H1 (cell line): ENCODE measurements at regions of chr16 and their contacts with region 1.

Region 1: GRCh38 chr16:117379-118365 is 20.8 kb downstream of the NPRL3 start:
- DNase-seq: peak; percentile 58 to 94
- H3K4me3 ChIP-seq: no peak overlapping the region
- H3K27ac ChIP-seq: no peak overlapping the region
- H3K4me1 ChIP-seq: peaks cover 0 to 4% (median 1%) of the 10 kb centered on the region in 4 experiments; a peak in 4 of 7 replicates
- H3K27me3 ChIP-seq: no peaks in the 10 kb centered on the region
- CTCF ChIP-seq: peak; percentile 89 to 90 (median 89)
- EP300 ChIP-seq: no peak
- POLR2A ChIP-seq: no peak
- RAD21 ChIP-seq: peak; percentile 80 to 82

Region 2: DNA sequence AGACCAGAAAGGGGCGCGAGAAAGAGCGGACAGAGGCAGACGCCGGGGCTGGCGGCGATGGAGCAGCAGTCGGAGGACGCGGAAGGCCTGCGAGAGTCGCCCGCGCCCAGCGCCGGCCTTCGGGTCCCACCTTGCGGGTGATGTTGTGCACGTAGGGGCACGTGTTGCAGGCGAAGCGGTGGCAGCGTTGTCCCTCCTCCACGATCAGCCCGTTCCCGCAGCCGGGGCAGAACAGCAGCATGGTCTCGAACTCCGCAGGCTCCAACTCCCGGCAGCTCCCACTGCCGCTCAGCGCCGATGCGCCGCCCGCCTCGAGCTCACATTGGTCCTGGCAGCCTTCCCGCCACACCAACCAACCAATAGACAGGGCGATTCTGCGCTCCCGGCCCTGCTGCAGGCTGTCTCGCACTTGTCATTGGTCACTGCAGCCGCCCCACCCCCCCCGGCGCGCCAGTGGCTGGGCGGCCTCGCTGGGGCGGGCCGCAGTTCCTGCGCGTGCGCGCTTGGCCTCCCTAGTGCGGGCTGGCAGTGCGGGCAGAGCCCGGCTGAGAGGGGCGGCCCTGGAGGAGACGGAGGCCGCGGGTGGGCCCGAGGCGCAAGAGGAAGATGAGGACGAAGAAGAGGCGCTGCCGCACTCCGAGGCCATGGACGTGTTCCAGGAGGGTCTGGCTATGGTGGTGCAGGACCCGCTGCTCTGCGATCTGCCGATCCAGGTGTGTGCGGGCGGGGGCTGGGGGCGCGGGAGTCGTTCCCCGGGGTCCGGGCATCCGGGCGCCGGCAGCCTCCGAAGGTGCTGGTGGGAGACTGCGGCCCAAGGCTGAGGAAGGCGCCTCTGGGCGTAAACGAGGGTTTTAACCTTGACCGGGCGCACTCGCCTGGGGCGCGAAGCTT is 64.1 kb before region 1 on chr16 and contains the starts of genes POLR3K and SNRNP25:
- CTCF ChIA-PET with region 1: interaction called, 12 read pairs
- POLR2A ChIA-PET with region 1: no interaction called
- DNase-seq: peak; percentile 92 to 97
- H3K4me3 ChIP-seq: peak within 1 kb of the TSS; percentile 79 to 95 (median 86)
- H3K27ac ChIP-seq: peak within 1 kb of the TSS; percentile 79
- H3K4me1 ChIP-seq: no peaks in the 10 kb centered on the region
- H3K27me3 ChIP-seq: no peaks in the 10 kb centered on the region
- CTCF ChIP-seq: no peak
- EP300 ChIP-seq: no peak
- POLR2A ChIP-seq: peak; percentile 66 to 93
- RAD21 ChIP-seq: no peak
- total RNA-seq, gene POLR3K: 45.4 and 49.6 TPM in 2 replicates
- total RNA-seq, gene SNRNP25: 49.6 and 58.4 TPM in 2 replicates

Region 3: GRCh38 chr16:77807-78443 is 39.7 kb before region 1 on chr16 and contains the start of gene MPG:
- CTCF ChIA-PET with region 1: interaction called, 12 read pairs
- POLR2A ChIA-PET with region 1: no interaction called
- DNase-seq: peak in 1 of 2 experiments; percentile 87
- H3K4me3 ChIP-seq: peak within 1 kb of the TSS; percentile 54 to 78 (median 68)
- H3K27ac ChIP-seq: no peak within 1 kb of the TSS
- H3K4me1 ChIP-seq: peaks cover 6 to 60% (median 41%) of the 10 kb centered on the region in 4 experiments
- H3K27me3 ChIP-seq: peaks cover 0 to 4% (median 3%) of the 10 kb centered on the region in 4 experiments; a peak in 3 of 7 replicates
- CTCF ChIP-seq: no peak
- EP300 ChIP-seq: no peak
- POLR2A ChIP-seq: no peak; a peak in 1 of 3 replicates
- RAD21 ChIP-seq: no peak
- total RNA-seq, gene MPG: 35.8 and 37.6 TPM in 2 replicates

Region 4: GRCh38 chr16:129075-129474 is 11.4 kb after region 1 on chr16:
- CTCF ChIA-PET with region 1: interaction called, 37 read pairs
- POLR2A ChIA-PET with region 1: interaction called, 3 read pairs
- DNase-seq: no peak
- H3K4me3 ChIP-seq: no peak overlapping the region
- H3K27ac ChIP-seq: no peak overlapping the region
- H3K4me1 ChIP-seq: no peaks in the 10 kb centered on the region
- H3K27me3 ChIP-seq: no peaks in the 10 kb centered on the region
- CTCF ChIP-seq: no peak
- EP300 ChIP-seq: no peak
- POLR2A ChIP-seq: no peak
- RAD21 ChIP-seq: no peak

Region 5: DNA sequence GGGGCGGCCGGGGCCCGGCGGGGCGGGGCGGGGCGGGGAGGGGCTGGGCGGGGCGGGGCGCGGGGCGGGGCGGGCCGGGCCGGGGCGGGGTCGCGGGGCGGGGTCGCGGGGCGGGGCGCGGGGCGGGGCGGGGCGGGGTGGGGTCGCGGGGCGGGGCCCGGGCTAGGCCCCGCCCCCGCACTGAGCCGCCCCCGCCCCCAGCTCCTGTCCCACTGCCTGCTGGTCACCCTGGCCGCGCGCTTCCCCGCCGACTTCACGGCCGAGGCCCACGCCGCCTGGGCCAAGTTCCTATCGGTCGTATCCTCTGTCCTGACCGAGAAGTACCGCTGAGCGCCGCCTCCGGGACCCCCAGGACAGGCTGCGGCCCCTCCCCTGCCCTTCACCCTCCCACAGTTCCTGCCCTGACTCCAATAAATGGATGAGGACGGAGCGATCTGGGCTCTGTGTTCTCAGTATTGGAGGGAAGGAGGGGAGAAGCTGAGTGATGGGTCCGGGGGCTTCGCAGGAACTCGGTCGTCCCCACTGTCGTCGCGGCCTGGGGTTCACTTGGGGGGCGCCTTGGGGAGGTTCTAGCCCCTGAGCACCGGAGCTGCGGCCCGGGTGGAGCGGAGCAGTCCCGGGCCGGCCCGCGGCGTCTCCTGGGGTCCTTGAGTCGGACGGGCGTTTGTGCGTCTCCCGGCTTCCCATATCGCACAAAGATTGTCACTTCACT is 47.3 kb after region 1 on chr16:
- CTCF ChIA-PET with region 1: interaction called, 24 read pairs
- POLR2A ChIA-PET with region 1: no interaction called
- DNase-seq: peak in 1 of 2 experiments; percentile 82
- H3K4me3 ChIP-seq: peak overlapping the region; percentile 14 to 59 (median 20); a peak in 7 of 8 replicates
- H3K27ac ChIP-seq: no peak overlapping the region
- H3K4me1 ChIP-seq: peaks cover 0 to 18% (median 16%) of the 10 kb centered on the region in 4 experiments; a peak in 6 of 7 replicates
- H3K27me3 ChIP-seq: peaks cover 33 to 58% (median 54%) of the 10 kb centered on the region in 4 experiments
- CTCF ChIP-seq: no peak
- EP300 ChIP-seq: no peak
- POLR2A ChIP-seq: no peak
- RAD21 ChIP-seq: no peak

Region 6: GRCh38 chr16:188671-189070 is 71.0 kb after region 1 on chr16:
- CTCF ChIA-PET with region 1: interaction called, 10 read pairs
- POLR2A ChIA-PET with region 1: no interaction called
- DNase-seq: no peak
- H3K4me3 ChIP-seq: no peak overlapping the region
- H3K27ac ChIP-seq: no peak overlapping the region
- H3K4me1 ChIP-seq: no peaks in the 10 kb centered on the region
- H3K27me3 ChIP-seq: no peaks in the 10 kb centered on the region
- CTCF ChIP-seq: peak; percentile 21 to 59 (median 58); a peak in 3 of 4 replicates
- EP300 ChIP-seq: no peak
- POLR2A ChIP-seq: no peak
- RAD21 ChIP-seq: no peak; a peak in 1 of 4 replicates

Region 7: GRCh38 chr16:263978-264951 is 146.6 kb after region 1 on chr16:
- CTCF ChIA-PET with region 1: no interaction called
- POLR2A ChIA-PET with region 1: no interaction called
- DNase-seq: no peak
- H3K4me3 ChIP-seq: no peak overlapping the region
- H3K27ac ChIP-seq: no peak overlapping the region
- H3K4me1 ChIP-seq: no peaks in the 10 kb centered on the region; a peak in 1 of 7 replicates
- H3K27me3 ChIP-seq: no peaks in the 10 kb centered on the region
- CTCF ChIP-seq: no peak
- EP300 ChIP-seq: no peak
- POLR2A ChIP-seq: no peak
- RAD21 ChIP-seq: no peak

Region 8: DNA sequence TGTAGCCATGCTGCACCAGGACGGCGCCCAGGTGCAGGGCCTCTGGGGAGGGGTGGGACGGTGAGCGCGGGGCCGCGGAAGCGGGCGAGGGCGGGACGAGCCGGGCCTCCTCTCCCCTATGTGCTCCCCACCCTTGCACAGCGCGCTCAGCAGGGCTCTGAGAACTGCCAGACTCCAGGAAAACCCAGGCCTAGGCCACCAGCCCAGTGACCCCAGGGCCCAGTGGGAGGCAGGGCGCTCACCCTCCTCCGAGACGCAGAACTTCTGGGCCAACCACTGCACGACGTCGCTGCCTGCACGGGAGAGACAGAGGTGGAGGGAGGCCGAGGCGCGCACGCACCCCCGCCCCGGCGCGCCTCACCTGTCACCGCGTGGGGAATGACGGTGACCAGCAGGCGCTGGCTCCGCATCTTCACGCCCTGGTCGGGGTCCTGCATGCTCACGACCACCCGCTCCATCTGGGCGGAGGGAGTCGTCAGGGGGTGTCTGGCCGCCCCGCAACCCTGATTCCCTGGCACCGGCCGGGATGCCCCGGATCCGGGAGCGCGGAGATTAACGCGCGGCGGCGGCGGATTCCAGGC is 157.5 kb after region 1 on chr16:
- CTCF ChIA-PET with region 1: no interaction called
- POLR2A ChIA-PET with region 1: no interaction called
- DNase-seq: no peak
- H3K4me3 ChIP-seq: peak overlapping the region; percentile 30 to 65 (median 49)
- H3K27ac ChIP-seq: no peak overlapping the region
- H3K4me1 ChIP-seq: peaks cover 0 to 6% (median 4%) of the 10 kb centered on the region in 4 experiments; a peak in 5 of 7 replicates
- H3K27me3 ChIP-seq: peaks cover 11 to 39% (median 35%) of the 10 kb centered on the region in 4 experiments
- CTCF ChIP-seq: no peak
- EP300 ChIP-seq: no peak
- POLR2A ChIP-seq: no peak
- RAD21 ChIP-seq: no peak